ENCODE measurements at regions of chr11 and their contacts with region 1.

Region 1: DNA sequence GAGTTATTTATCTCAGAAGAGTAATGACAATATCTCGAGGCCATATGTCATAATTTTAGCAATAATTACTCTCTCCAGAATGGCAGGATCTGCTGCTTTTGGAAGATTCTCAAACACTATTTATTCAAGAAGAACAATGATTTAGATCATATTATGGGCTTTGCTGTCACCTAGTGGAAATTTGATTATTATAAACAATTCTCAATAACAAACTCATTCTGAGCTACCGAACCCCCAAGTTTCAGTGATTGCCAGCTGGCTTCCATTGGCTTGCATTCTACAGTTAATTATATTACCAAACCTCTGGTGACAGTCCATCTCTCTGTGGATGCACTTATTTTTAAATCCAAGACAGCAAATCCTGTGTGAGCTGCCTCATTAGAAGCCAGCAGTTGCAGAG is 27.9 kb upstream of the SLC36A4 start:
- DNase-seq: no peak
- H3K4me3 ChIP-seq: no peak overlapping the region
- H3K27ac ChIP-seq: no peak overlapping the region
- H3K4me1 ChIP-seq: no peaks in the 10 kb centered on the region
- H3K27me3 ChIP-seq: no peaks in the 10 kb centered on the region
- CTCF ChIP-seq: no peak
- POLR2A ChIP-seq: no peak

Region 2: DNA sequence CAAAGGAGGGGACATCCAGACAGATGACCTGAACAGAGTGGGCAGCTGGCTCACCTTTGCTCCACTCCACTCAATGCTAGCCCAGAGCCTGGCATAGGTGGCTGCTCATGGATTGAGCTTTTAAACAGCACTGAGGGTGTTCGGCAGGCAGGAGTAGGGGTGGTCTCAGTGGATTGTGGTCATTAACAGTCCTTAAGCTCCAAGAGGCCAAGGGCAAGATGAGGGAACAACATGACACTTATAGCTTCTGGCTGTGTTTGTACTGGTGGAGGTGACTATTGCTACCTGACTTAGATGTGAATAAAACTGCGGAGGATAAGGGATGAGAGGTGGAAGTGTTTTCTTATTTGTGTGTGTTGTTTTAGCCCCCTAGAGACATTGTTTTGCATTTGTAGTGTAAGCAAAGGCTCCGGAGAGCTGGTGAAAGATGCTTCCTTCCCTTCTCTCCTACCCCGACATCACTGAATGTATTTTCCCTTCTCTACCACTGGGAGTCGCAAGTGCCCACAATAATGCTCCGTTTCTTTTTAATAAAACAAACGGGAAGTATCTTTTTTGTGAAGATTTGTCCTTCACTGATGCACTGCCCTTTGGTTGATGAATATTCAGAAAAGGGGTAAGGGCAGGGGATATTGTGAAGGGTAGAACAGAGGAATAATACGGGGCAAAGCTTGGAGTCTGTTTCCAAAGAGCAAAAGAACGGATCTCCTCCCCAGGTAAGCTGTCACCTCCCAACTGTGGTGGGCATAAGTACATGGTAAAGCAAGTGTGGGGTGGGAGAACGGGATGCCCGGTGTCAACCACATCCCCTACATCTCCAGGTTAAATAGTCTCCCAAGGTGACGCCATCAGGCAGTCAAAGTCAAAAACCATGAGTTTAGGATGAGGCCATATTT is 283.7 kb before region 1 on chr11:
- intact Hi-C with region 1: loop called (anchors 10 kb)
- DNase-seq: no peak
- H3K4me3 ChIP-seq: no peak overlapping the region
- H3K27ac ChIP-seq: no peak overlapping the region
- H3K4me1 ChIP-seq: no peaks in the 10 kb centered on the region
- H3K27me3 ChIP-seq: no peaks in the 10 kb centered on the region
- CTCF ChIP-seq: peak; percentile 18 to 52 (median 48)
- POLR2A ChIP-seq: no peak